GM12878 (cell line): ENCODE measurements at regions of chr22 and their contacts with region 1.

Region 1: DNA sequence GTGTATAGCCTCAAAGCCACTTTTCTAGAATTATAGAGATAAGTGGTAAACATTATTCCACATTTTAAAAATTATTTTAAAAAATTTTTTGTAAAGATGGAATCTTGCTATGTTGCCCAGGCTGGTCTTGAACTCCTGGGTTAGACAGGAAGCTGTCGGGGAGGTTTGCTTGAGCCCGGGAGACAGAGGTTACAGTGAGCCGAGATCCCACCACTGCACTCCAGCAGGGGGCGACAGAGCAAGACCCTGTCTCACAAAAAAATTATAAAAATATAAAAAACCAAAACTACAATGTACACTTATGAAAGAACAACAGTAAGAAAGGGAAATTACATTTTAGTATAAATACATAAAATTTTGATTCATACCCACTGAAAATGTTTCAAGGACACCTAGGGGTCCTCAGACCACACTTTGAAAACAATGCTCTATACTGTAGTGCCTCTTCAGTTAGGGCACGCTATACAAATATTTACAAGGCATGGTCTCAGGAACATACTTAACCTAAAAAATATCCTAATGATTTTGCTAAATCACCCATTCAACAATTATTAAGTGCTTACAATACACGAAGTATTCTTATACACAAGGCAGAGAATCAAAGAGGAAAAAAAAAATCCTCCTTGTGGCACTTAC is 111.2 kb downstream of the MRTFA start:
- DNase-seq: no peak
- ATAC-seq: peak; percentile 78
- H3K4me3 ChIP-seq: no peak overlapping the region
- H3K27ac ChIP-seq: no peak overlapping the region; the same call in 1 of the 2 replicates
- H3K4me1 ChIP-seq: peaks cover 15% of the 10 kb centered on the region
- H3K27me3 ChIP-seq: no peaks in the 10 kb centered on the region
- CTCF ChIP-seq: peak; percentile 51 to 68 (median 62)
- EP300 ChIP-seq: no peak
- POLR2A ChIP-seq: no peak
- RAD21 ChIP-seq: peak; percentile 68

Region 2: GRCh38 chr22:40156001-40156516 is 369.3 kb before region 1 on chr22:
- CTCF ChIA-PET with region 1: no interaction called
- POLR2A ChIA-PET with region 1: no interaction called
- RAD21 ChIA-PET with region 1: no interaction called
- SMC1A ChIA-PET with region 1: no interaction called
- in situ Hi-C with region 1: no loop called
- intact Hi-C with region 1: no loop called
- DNase-seq: no peak
- ATAC-seq: no peak
- H3K4me3 ChIP-seq: no peak overlapping the region
- H3K27ac ChIP-seq: no peak overlapping the region
- H3K4me1 ChIP-seq: no peaks in the 10 kb centered on the region
- H3K27me3 ChIP-seq: no peaks in the 10 kb centered on the region
- CTCF ChIP-seq: peak in 1 of 3 experiments; percentile 4; a peak in 1 of 6 replicates
- EP300 ChIP-seq: no peak
- POLR2A ChIP-seq: no peak
- RAD21 ChIP-seq: peak; percentile 21; the same call in 1 of the 2 replicates

Region 3: GRCh38 chr22:40426594-40427333 is 98.6 kb before region 1 on chr22:
- CTCF ChIA-PET with region 1: no interaction called
- POLR2A ChIA-PET with region 1: no interaction called
- RAD21 ChIA-PET with region 1: no interaction called
- SMC1A ChIA-PET with region 1: no interaction called
- in situ Hi-C with region 1: no loop called
- intact Hi-C with region 1: no loop called
- DNase-seq: no peak
- ATAC-seq: no peak
- H3K4me3 ChIP-seq: no peak overlapping the region
- H3K27ac ChIP-seq: no peak overlapping the region; the same call in 1 of the 2 replicates
- H3K4me1 ChIP-seq: no peaks in the 10 kb centered on the region
- H3K27me3 ChIP-seq: no peaks in the 10 kb centered on the region
- CTCF ChIP-seq: no peak
- EP300 ChIP-seq: no peak
- POLR2A ChIP-seq: 0 out of 2 replicates have a peak, but pooled peaks have one; percentile 36
- RAD21 ChIP-seq: no peak

Region 4: GRCh38 chr22:40509401-40510134 is 15.8 kb before region 1 on chr22:
- CTCF ChIA-PET with region 1: interaction called, 17 read pairs
- POLR2A ChIA-PET with region 1: interaction called, 3 read pairs
- RAD21 ChIA-PET with region 1: interaction called, 4 read pairs
- SMC1A ChIA-PET with region 1: interaction called, 18 read pairs
- in situ Hi-C with region 1: no loop called
- intact Hi-C with region 1: no loop called
- DNase-seq: no peak
- ATAC-seq: peak; percentile 73
- H3K4me3 ChIP-seq: no peak overlapping the region
- H3K27ac ChIP-seq: peak overlapping the region; percentile 10
- H3K4me1 ChIP-seq: peaks cover 10% of the 10 kb centered on the region
- H3K27me3 ChIP-seq: no peaks in the 10 kb centered on the region
- CTCF ChIP-seq: no peak
- EP300 ChIP-seq: no peak
- POLR2A ChIP-seq: no peak
- RAD21 ChIP-seq: no peak

Region 5: DNA sequence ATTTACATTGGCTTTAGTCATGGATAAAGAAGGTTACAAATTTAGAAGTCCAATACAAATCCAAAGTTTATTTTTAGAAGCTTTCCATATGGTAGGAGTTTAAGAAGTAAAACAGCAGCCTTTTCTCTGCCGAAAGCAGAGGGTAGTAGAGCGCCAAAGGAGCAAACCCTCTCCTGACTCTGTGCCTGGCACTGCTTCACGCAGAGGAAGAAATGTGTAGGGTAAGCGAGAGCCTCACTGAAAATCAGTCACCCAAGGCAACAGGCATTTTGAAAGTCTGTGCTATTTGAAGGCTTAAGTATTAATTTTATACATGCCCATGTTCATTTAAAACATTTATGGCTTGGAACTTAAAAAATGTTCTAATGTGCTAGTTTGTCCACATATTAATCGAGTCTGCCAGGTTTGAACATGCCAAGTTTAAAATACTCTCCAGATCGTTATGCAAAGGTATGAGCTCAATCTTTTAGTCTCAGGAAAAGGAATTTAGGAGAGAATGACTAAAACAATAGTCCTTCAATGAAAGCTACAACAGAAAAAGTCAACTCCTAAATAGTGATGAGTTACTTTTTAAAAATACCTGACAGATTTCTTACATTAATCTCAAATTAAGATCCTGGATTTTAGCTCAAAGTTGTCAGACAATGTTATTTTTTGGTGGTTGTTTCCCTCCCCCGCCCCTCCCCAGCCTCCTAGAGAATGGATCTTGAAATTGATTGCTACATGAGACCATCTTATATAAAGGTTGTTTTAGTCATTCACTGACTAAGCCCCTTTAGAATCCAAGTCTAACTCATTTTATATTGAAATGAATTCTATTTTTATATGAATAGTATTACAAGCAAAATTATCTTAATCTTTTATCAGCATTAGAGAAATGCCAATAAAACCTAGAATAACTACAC is 72.4 kb after region 1 on chr22:
- CTCF ChIA-PET with region 1: interaction called, 44 read pairs
- POLR2A ChIA-PET with region 1: interaction called, 8 read pairs
- RAD21 ChIA-PET with region 1: interaction called, 37 read pairs
- SMC1A ChIA-PET with region 1: interaction called, 130 read pairs
- in situ Hi-C with region 1: no loop called
- intact Hi-C with region 1: loop called (anchors 5 kb)
- DNase-seq: no peak
- ATAC-seq: no peak
- H3K4me3 ChIP-seq: no peak overlapping the region
- H3K27ac ChIP-seq: no peak overlapping the region; the same call in 1 of the 2 replicates
- H3K4me1 ChIP-seq: peaks cover 54% of the 10 kb centered on the region
- H3K27me3 ChIP-seq: no peaks in the 10 kb centered on the region
- CTCF ChIP-seq: 0 out of 6 replicates have a peak, but pooled peaks of 1 of the 3 experiments have one; percentile 0
- EP300 ChIP-seq: no peak
- POLR2A ChIP-seq: no peak
- RAD21 ChIP-seq: no peak

Region 6: GRCh38 chr22:40651563-40652501 is 126.5 kb after region 1 on chr22:
- CTCF ChIA-PET with region 1: interaction called, 339 read pairs
- POLR2A ChIA-PET with region 1: interaction called, 11 read pairs
- RAD21 ChIA-PET with region 1: interaction called, 137 read pairs
- SMC1A ChIA-PET with region 1: interaction called, 248 read pairs
- in situ Hi-C with region 1: no loop called
- intact Hi-C with region 1: no loop called
- DNase-seq: no peak
- ATAC-seq: peak; percentile 85
- H3K4me3 ChIP-seq: peak overlapping the region; percentile 49; the same call in 1 of the 2 replicates
- H3K27ac ChIP-seq: peak overlapping the region; percentile 85
- H3K4me1 ChIP-seq: peaks cover 8% of the 10 kb centered on the region
- H3K27me3 ChIP-seq: no peaks in the 10 kb centered on the region
- CTCF ChIP-seq: no peak
- EP300 ChIP-seq: no peak
- POLR2A ChIP-seq: peak; percentile 91
- RAD21 ChIP-seq: no peak

Region 7: GRCh38 chr22:40758390-40758789 is 233.0 kb after region 1 on chr22:
- CTCF ChIA-PET with region 1: interaction called, 10 read pairs
- POLR2A ChIA-PET with region 1: no interaction called
- RAD21 ChIA-PET with region 1: no interaction called
- SMC1A ChIA-PET with region 1: interaction called, 3 read pairs
- in situ Hi-C with region 1: no loop called
- intact Hi-C with region 1: no loop called
- DNase-seq: no peak
- ATAC-seq: no peak
- H3K4me3 ChIP-seq: no peak overlapping the region
- H3K27ac ChIP-seq: no peak overlapping the region
- H3K4me1 ChIP-seq: no peaks in the 10 kb centered on the region
- H3K27me3 ChIP-seq: no peaks in the 10 kb centered on the region
- CTCF ChIP-seq: no peak
- EP300 ChIP-seq: no peak
- POLR2A ChIP-seq: no peak
- RAD21 ChIP-seq: no peak